A673 (cell line): ENCODE measurements at regions of chr10 and their contacts with region 1.

Region 1: GRCh38 chr10:43221419-43222209 is 45.3 kb downstream of the RASGEF1A start:
- DNase-seq: no peak
- H3K4me3 ChIP-seq: no peak overlapping the region
- H3K27ac ChIP-seq: no peak overlapping the region
- H3K4me1 ChIP-seq: no peaks in the 10 kb centered on the region
- H3K27me3 ChIP-seq: no peaks in the 10 kb centered on the region
- CTCF ChIP-seq: no peak

Region 2: DNA sequence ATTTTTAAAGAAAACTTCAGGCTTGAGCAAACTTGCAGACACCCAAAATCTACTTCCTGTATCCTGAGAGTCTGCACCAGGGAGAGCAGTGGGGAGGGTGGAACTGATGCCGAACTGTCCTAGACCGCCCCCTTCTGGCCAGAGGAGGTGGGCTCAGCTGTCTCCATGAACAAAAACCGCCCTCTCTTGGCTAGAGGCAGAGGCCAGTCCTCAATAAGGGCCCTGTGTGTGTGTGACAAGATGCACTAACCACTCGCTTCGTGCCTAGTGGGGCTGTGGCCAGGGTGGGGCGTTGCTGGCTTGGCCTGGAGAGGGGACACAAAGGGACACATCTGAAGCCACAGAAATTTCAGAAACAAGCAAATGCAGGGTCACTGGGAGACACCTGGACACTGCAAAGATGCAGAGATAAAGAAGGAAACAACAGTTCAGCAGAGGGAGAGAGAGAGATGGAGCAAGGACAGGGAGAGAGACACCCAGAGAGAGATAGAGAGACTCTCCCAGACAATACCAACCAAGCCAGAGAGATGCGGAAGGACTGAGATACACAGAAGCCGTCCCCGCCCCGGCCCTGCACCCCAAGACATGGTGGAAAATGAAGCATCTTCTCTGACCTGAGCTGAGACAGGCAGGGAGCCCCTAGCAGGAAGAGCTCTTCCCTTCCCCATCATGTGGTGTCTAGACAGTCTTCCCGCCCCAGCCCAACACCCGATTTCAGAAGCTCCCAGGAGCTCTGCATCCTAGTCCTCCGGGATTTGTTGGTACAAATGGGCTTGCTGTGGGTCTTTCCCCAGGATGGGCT is 127.1 kb after region 1 on chr10:
- CTCF ChIA-PET with region 1: no interaction called
- POLR2A ChIA-PET with region 1: no interaction called
- intact Hi-C with region 1: loop called (anchors 10 kb)
- DNase-seq: peak; percentile 86
- H3K4me3 ChIP-seq: no peak overlapping the region
- H3K27ac ChIP-seq: no peak overlapping the region
- H3K4me1 ChIP-seq: peaks cover 2% of the 10 kb centered on the region
- H3K27me3 ChIP-seq: no peaks in the 10 kb centered on the region
- CTCF ChIP-seq: peak; percentile 98

Region 3: GRCh38 chr10:44380841-44381600 is 1159.4 kb after region 1 on chr10:
- CTCF ChIA-PET with region 1: no interaction called
- POLR2A ChIA-PET with region 1: no interaction called
- intact Hi-C with region 1: no loop called
- DNase-seq: no peak
- H3K4me3 ChIP-seq: no peak overlapping the region
- H3K27ac ChIP-seq: no peak overlapping the region
- H3K4me1 ChIP-seq: no peaks in the 10 kb centered on the region
- H3K27me3 ChIP-seq: peaks cover 27% of the 10 kb centered on the region
- CTCF ChIP-seq: no peak